Left ventricle myocardium inferior (tissue), 1 donor: ENCODE measurements at regions of chr6 and their contacts with region 1.

Region 1: GRCh38 chr6:73675466-73676098 is 20.4 kb upstream of the CD109 start:
- DNase-seq: peak; percentile 46
- H3K4me3 ChIP-seq: no peak overlapping the region
- H3K27ac ChIP-seq: no peak overlapping the region
- H3K4me1 ChIP-seq: peaks cover 6% of the 10 kb centered on the region
- H3K27me3 ChIP-seq: peaks cover 8% of the 10 kb centered on the region
- CTCF ChIP-seq: peak; percentile 94

Region 2: DNA sequence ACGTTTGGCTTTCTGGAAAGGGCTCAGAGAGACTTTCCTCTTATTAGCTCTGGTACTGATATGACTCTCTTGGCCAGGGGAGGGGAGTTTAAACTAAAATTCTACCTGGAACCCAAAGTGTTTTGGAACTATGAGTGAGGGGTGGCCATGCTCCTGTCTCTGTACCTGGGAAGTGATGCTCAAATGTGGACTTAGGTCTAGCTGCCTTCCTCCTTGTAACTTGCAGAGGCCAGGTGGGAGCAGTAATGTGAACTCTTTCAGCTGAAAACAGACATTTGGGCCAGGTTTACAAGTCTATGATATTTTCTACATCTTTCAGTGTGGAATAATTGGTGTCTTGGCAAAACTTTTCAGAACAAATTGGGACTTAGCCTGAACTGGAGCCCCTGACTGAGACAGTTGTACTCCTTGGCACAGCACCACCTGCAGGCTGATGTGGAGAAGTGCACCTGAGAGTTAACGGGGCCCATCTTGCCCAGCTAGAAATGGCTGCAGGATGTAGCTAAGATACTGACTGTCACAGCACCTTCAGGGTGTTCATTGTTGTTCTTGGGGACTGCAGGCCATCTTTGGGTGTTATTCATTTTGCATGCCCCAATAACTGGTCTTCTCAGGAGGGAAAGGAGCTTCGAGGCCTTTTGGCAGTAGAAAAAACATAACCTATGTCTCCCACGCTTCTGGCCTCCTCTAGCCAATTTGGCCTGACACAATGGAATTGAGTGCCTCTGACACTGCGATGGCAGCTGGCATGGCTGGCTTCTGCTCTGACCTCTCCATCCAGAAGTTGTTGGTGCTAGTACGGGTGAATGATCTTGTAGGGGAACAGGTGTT is 57.5 kb after region 1 on chr6:
- intact Hi-C with region 1: loop called (anchors 2 kb)
- DNase-seq: peak; percentile 32
- H3K4me3 ChIP-seq: no peak overlapping the region
- H3K27ac ChIP-seq: no peak overlapping the region
- H3K4me1 ChIP-seq: peaks cover 2% of the 10 kb centered on the region
- H3K27me3 ChIP-seq: no peaks in the 10 kb centered on the region
- CTCF ChIP-seq: peak; percentile 94

Region 3: DNA sequence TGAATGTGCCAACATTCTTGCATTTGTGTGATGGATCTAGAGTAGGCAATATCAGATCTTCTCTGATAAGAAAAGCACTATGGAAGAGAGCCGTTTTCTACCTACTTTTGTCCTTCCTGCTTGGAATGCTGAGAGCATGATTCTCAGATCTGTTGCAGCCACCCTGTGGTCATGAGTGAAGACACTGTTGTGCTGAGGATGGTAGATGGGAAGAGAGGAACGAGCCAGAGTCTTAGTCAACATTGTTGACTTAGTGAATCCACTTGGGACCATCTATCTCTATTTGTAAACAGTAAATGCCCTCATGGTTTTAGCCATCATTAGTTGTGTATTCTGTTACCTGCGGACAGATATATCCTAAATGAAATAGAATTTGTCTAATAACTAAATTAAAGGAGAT is 223.0 kb after region 1 on chr6:
- intact Hi-C with region 1: no loop called
- DNase-seq: no peak
- H3K4me3 ChIP-seq: no peak overlapping the region
- H3K27ac ChIP-seq: no peak overlapping the region
- H3K4me1 ChIP-seq: no peaks in the 10 kb centered on the region
- H3K27me3 ChIP-seq: no peaks in the 10 kb centered on the region
- CTCF ChIP-seq: peak; percentile 12